MCF 10A (cell line): ENCODE measurements at regions of chr3 and their contacts with region 1.

Region 1: GRCh38 chr3:196969660-196970546 is 1.3 kb upstream of the PIGZ start:
- DNase-seq: peak; percentile 54
- H3K4me3 Mint-ChIP-seq: peak overlapping the region; percentile 68
- H3K27ac Mint-ChIP-seq: no peak overlapping the region
- H3K4me1 Mint-ChIP-seq: no peaks in the 10 kb centered on the region
- H3K27me3 Mint-ChIP-seq: no peaks in the 10 kb centered on the region
- CTCF ChIP-seq: peak; percentile 74

Region 2: DNA sequence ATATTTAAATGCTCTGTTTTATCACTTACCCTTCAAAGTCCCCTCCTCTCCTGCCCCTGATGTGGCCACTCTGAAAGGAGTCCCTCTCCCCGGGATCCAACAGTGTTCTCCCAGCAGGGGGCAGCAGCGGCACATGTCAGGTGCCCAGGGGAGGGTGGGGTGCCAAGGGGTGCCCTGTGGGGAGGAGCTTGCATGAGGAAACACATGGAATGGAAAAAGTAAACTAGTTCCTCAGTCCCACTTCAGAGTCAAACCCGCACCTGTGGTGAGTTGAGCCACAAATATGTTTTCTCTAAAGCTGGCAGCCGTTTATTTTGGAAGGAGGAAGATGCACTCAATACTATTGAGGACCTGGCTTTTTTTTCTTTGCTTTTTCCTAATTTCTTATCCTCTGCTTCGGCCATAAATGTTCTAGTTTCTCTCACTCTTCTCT is 360.5 kb before region 1 on chr3:
- CTCF ChIA-PET with region 1: interaction called, 3 read pairs
- POLR2A ChIA-PET with region 1: no interaction called
- intact Hi-C with region 1: loop called (anchors 2 kb)
- DNase-seq: peak; percentile 89
- H3K4me3 Mint-ChIP-seq: no peak overlapping the region
- H3K27ac Mint-ChIP-seq: no peak overlapping the region
- H3K4me1 Mint-ChIP-seq: peaks cover 9% of the 10 kb centered on the region
- H3K27me3 Mint-ChIP-seq: no peaks in the 10 kb centered on the region
- CTCF ChIP-seq: peak; percentile 93

Region 3: DNA sequence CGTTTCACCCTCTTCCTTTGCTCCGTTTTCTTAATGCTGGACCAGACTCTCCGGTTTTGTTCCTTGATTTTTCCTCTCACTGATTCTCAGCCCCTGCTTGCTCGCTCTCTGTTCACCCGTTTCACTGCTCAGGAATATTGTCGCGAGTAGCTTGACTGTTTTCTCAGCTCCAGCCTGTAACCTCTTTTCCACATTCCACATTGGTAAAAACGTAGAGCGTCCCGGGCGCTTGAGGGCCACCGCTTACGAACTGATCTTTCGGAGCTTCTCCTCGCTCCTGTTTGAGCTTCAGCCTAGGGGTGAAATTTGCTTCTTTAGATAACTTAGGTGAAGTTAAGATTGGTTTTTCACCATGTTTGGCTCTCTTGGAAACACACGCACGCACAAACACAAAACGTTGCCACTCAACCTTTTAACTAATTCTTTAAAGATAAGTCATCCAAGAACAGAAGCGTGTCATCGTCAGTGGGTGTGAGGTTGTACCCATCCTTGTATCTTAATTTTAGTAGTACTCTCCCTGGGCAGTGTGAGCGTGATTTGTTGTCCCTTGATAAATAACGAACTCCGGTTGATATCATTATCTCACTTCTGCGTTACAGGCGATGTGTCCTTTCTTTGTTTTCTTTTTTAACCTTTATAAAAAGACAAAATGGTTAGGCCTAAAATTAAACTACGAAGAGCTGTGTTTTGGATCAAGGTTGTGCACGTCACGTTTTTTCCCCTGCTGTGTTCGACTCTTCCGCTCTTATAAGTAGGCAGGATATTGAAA is 229.2 kb before region 1 on chr3:
- CTCF ChIA-PET with region 1: no interaction called
- POLR2A ChIA-PET with region 1: no interaction called
- intact Hi-C with region 1: no loop called
- DNase-seq: peak; percentile 50
- H3K4me3 Mint-ChIP-seq: peak overlapping the region; percentile 98
- H3K27ac Mint-ChIP-seq: peak overlapping the region; percentile 98
- H3K4me1 Mint-ChIP-seq: peaks cover 11% of the 10 kb centered on the region
- H3K27me3 Mint-ChIP-seq: no peaks in the 10 kb centered on the region
- CTCF ChIP-seq: no peak

Region 4: GRCh38 chr3:196837819-196838420 is 132.0 kb before region 1 on chr3:
- CTCF ChIA-PET with region 1: no interaction called
- POLR2A ChIA-PET with region 1: no interaction called
- intact Hi-C with region 1: loop called (anchors 1 kb)
- DNase-seq: peak; percentile 77
- H3K4me3 Mint-ChIP-seq: no peak overlapping the region
- H3K27ac Mint-ChIP-seq: no peak overlapping the region
- H3K4me1 Mint-ChIP-seq: no peaks in the 10 kb centered on the region
- H3K27me3 Mint-ChIP-seq: no peaks in the 10 kb centered on the region
- CTCF ChIP-seq: peak; percentile 57